IMR-90 (cell line): ENCODE measurements at regions of chr4 and their contacts with region 1.

Region 1: DNA sequence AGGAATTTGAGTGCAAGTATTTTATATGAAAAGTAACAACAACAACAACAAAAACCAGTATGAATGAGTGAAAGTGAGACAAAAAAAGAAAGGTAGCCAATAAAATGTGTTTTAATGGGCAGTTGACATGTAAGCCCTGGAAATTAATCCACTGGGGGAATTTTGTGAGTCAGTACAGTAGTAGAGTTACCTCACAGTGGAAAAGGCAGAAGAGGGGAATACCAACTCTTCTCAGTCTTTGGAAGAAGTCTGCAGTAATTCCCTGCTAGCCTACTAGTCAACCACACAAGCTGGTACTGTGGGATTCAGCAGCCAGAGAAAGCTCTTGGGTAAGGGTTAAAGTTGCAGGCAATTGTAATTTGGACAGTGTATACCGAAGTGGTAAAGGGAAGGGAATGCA is 76.3 kb upstream of the IL15 start:
- DNase-seq: peak; percentile 52
- ATAC-seq: no peak
- H3K4me3 ChIP-seq: no peak overlapping the region
- H3K27ac ChIP-seq: no peak overlapping the region
- H3K4me1 ChIP-seq: no peaks in the 10 kb centered on the region
- H3K27me3 ChIP-seq: no peaks in the 10 kb centered on the region
- CTCF ChIP-seq: no peak
- POLR2A ChIP-seq: no peak
- RAD21 ChIP-seq: no peak

Region 2: DNA sequence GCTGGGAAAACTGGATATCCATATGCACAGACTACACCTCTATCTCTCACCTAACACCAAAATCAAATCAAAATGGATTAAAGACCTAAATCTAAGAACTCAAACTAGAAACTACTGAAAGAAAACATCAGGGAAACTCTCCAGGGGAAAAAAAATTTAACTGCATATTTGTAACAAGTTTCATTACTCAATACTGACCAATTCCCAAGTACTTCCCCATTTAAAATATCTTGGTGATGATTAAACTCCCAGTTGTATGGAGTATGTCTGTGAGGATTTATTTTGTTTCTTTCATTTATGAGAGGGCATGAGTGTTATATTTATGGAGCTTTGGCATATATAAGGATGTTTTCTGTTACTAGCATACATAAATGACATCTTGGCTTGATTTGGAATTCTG is 35.9 kb before region 1 on chr4:
- CTCF ChIA-PET with region 1: no interaction called
- POLR2A ChIA-PET with region 1: no interaction called
- dilution Hi-C with region 1: no loop called
- in situ Hi-C with region 1: no loop called
- intact Hi-C with region 1: no loop called
- DNase-seq: peak; percentile 52
- ATAC-seq: peak; percentile 91
- H3K4me3 ChIP-seq: no peak overlapping the region
- H3K27ac ChIP-seq: no peak overlapping the region
- H3K4me1 ChIP-seq: 0 out of 2 replicates have a peak, but pooled peaks cover 2% of the 10 kb centered on the region
- H3K27me3 ChIP-seq: no peaks in the 10 kb centered on the region
- CTCF ChIP-seq: no peak
- POLR2A ChIP-seq: no peak
- RAD21 ChIP-seq: no peak

Region 3: GRCh38 chr4:141922236-141922635 is 362.2 kb after region 1 on chr4:
- CTCF ChIA-PET with region 1: no interaction called
- POLR2A ChIA-PET with region 1: no interaction called
- dilution Hi-C with region 1: no loop called
- in situ Hi-C with region 1: no loop called
- intact Hi-C with region 1: no loop called
- DNase-seq: no peak
- ATAC-seq: no peak
- H3K4me3 ChIP-seq: no peak overlapping the region
- H3K27ac ChIP-seq: no peak overlapping the region
- H3K4me1 ChIP-seq: no peaks in the 10 kb centered on the region
- H3K27me3 ChIP-seq: no peaks in the 10 kb centered on the region
- CTCF ChIP-seq: no peak
- POLR2A ChIP-seq: no peak
- RAD21 ChIP-seq: no peak

Region 4: GRCh38 chr4:142631836-142632235 is 1071.8 kb after region 1 on chr4:
- CTCF ChIA-PET with region 1: no interaction called
- POLR2A ChIA-PET with region 1: no interaction called
- dilution Hi-C with region 1: no loop called
- in situ Hi-C with region 1: no loop called
- intact Hi-C with region 1: loop called (anchors 5 kb)
- DNase-seq: no peak
- ATAC-seq: no peak
- H3K4me3 ChIP-seq: no peak overlapping the region
- H3K27ac ChIP-seq: no peak overlapping the region
- H3K4me1 ChIP-seq: no peaks in the 10 kb centered on the region
- H3K27me3 ChIP-seq: no peaks in the 10 kb centered on the region
- CTCF ChIP-seq: no peak
- POLR2A ChIP-seq: no peak
- RAD21 ChIP-seq: no peak